Dorsolateral prefrontal cortex (tissue), 120 donors: ENCODE measurements at regions of chr9 and their contacts with region 1.

Region 1: GRCh38 chr9:132079391-132080091 is at the start of gene MED27:
- DNase-seq: peak; percentile 91 to 96 (median 94)
- H3K4me3 ChIP-seq: peak within 1 kb of the TSS; percentile 62 to 98 (median 90)
- H3K27ac ChIP-seq: peak within 1 kb of the TSS in 54 of 59 donors; percentile 5 to 94 (median 74)
- H3K27me3 ChIP-seq: no peaks in the 10 kb centered on the region
- CTCF ChIP-seq: peak in 32 of 56 donors; percentile 4 to 49 (median 20)
- total RNA-seq, gene MED27: 17.8 to 40.0 (median 27.6) TPM

Region 2: GRCh38 chr9:132160802-132161742 is 81.5 kb after region 1 on chr9:
- intact Hi-C with region 1: loop called in 1 of 2 experiments (anchors 5 kb)
- DNase-seq: peak in 2 of 10 donors; percentile 49 to 67
- H3K4me3 ChIP-seq: peak overlapping the region; percentile 46 to 91 (median 77)
- H3K27ac ChIP-seq: peak overlapping the region in 44 of 59 donors; percentile 23 to 84 (median 60)
- H3K27me3 ChIP-seq: peaks cover 0 to 7% (median 0%) of the 10 kb centered on the region in 45 donors
- CTCF ChIP-seq: no peak